ENCODE measurements at regions of chr7 and their contacts with region 1.

Region 1: GRCh38 chr7:35985126-35985754 is 167.8 kb upstream of the EEPD1 start:
- DNase-seq: peak; percentile 70 to 92 (median 84)
- ATAC-seq: peak; percentile 99
- H3K4me3 ChIP-seq: no peak overlapping the region
- H3K27ac ChIP-seq: no peak overlapping the region
- H3K4me1 ChIP-seq: no peaks in the 10 kb centered on the region
- H3K27me3 ChIP-seq: no peaks in the 10 kb centered on the region
- CTCF ChIP-seq: peak; percentile 84 to 93

Region 2: DNA sequence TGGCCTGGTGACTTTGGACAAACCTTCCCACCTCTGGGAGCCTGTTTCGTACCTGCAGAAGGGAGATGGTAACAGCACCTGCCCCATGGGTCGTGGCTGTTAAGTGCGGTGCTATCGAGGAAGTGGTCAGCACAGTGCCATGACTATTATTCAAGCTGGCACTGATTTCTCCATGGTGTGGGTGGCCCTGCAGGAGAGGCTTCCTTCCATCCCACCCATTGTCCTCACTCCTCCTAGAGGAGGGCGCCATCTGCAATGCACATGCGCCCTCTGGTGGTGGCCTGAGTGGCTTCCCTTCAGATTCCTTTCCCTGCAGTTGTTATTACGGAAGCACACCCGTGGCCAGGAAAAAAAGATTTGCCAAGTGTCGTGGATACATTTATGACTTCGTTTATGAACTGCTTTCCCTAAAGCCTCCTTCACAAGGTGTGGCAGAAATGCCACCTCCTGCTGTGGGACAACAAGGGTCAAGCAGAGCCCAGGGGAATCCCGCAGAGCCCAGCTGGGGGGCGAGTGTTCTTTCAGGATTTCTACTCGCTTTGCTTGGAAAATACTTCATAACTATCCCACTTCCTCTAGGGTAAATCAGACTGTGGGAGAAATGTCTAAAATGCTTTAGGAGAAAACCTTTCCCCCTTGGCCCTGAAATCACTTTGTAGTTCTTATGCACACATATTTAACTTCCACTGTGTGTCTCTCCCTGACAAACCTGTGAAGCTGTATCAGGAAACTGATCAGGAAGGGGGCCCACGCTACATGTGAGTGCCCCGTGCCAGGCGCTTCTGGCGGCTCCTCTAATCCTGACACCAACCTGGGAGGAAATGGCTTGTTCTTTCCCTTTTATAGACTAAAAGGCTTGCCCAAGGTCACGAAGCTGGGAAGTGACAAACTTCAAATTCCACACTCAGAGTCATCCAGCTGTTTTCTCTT is 306.4 kb after region 1 on chr7:
- intact Hi-C with region 1: loop called in 1 of 2 experiments (anchors 5 kb)
- DNase-seq: peak; percentile 82 to 94 (median 91)
- ATAC-seq: peak; percentile 95
- H3K4me3 ChIP-seq: peak overlapping the region in 1 of 2 donors; percentile 18
- H3K27ac ChIP-seq: peak overlapping the region; percentile 71 to 83
- H3K4me1 ChIP-seq: peaks cover 8 to 49% of the 10 kb centered on the region in 2 donors
- H3K27me3 ChIP-seq: no peaks in the 10 kb centered on the region
- CTCF ChIP-seq: peak; percentile 96 to 97